Activated CD4-positive, alpha-beta T cell treated with anti-CD3 and anti-CD28 coated beads for 36 hours (primary cell): ENCODE measurements at regions of chr1 and their contacts with region 1.

Region 1: GRCh38 chr1:15820478-15820877 is 13.0 kb upstream of the UQCRHL start:
- DNase-seq: no peak
- ATAC-seq: no peak
- H3K4me3 Mint-ChIP-seq: no peak overlapping the region
- H3K27ac Mint-ChIP-seq: no peak overlapping the region
- H3K4me1 Mint-ChIP-seq: peaks cover 6% of the 10 kb centered on the region
- H3K27me3 Mint-ChIP-seq: no peaks in the 10 kb centered on the region

Region 2: DNA sequence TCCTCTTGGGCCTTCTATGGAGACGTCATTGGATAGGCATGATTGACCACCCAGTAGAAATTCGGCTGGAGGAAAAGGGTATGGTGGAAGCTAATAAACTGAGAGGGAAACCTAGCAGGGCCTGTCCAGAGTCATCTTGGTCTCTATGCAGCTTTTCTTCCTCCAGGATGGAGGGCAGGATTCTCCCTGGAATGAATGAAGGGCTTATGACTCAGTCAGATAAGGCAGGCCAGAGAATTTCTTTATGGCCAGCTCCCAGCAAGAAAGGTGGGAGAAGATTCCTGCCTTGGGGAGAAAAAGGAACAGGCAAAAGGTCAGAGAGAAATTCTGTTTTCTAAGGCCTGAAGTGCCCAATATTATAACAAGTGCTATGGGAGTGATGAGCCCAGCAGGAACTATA is 44.8 kb before region 1 on chr1:
- CTCF ChIA-PET with region 1: no interaction called
- POLR2A ChIA-PET with region 1: no interaction called
- intact Hi-C with region 1: no loop called
- DNase-seq: no peak
- ATAC-seq: no peak
- H3K4me3 Mint-ChIP-seq: no peak overlapping the region
- H3K27ac Mint-ChIP-seq: no peak overlapping the region
- H3K4me1 Mint-ChIP-seq: no peaks in the 10 kb centered on the region
- H3K27me3 Mint-ChIP-seq: peaks cover 5% of the 10 kb centered on the region

Region 3: GRCh38 chr1:15994590-15995351 is 174.3 kb after region 1 on chr1:
- CTCF ChIA-PET with region 1: interaction called, 11 read pairs
- POLR2A ChIA-PET with region 1: no interaction called
- intact Hi-C with region 1: loop called in 1 of 2 experiments (anchors 1 kb)
- DNase-seq: peak; percentile 77
- ATAC-seq: peak; percentile 92
- H3K4me3 Mint-ChIP-seq: no peak overlapping the region
- H3K27ac Mint-ChIP-seq: peak overlapping the region; percentile 19
- H3K4me1 Mint-ChIP-seq: no peaks in the 10 kb centered on the region
- H3K27me3 Mint-ChIP-seq: no peaks in the 10 kb centered on the region